Calu3 (cell line): ENCODE measurements at regions of chr6 and their contacts with region 1.

Region 1: GRCh38 chr6:6826095-6826901 is 237.8 kb downstream of the LY86 start:
- DNase-seq: peak; percentile 46
- H3K4me3 Mint-ChIP-seq: no peak overlapping the region
- H3K27ac Mint-ChIP-seq: no peak overlapping the region
- H3K4me1 Mint-ChIP-seq: no peaks in the 10 kb centered on the region
- H3K27me3 Mint-ChIP-seq: no peaks in the 10 kb centered on the region
- CTCF ChIP-seq: no peak

Region 2: GRCh38 chr6:6686748-6687601 is 139.3 kb before region 1 on chr6:
- CTCF ChIA-PET with region 1: no interaction called
- intact Hi-C with region 1: no loop called
- DNase-seq: peak; percentile 97
- H3K4me3 Mint-ChIP-seq: peak overlapping the region; percentile 73
- H3K27ac Mint-ChIP-seq: peak overlapping the region; percentile 75
- H3K4me1 Mint-ChIP-seq: peaks cover 28% of the 10 kb centered on the region
- H3K27me3 Mint-ChIP-seq: no peaks in the 10 kb centered on the region
- CTCF ChIP-seq: no peak

Region 3: DNA sequence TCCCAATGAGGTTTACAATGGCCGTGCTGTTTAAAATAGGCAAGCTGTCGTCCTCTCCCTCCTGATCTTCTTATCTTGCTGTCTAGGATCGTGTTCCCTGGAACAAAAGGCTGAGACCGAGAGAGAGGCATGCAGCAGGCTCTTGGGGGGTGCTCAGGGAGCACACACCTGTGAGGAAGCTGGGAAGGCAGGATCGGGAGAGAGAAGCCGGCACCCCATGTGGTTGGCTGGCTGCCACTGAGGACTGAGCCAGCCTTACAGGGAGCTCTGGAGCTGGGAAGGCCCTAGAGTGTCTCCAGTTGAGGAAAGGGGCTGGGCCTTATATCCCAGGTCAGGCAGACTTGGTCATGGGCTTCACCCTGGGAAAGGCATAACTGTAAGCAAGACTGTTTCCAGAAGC is 53.5 kb before region 1 on chr6:
- CTCF ChIA-PET with region 1: no interaction called
- intact Hi-C with region 1: no loop called
- DNase-seq: no peak
- H3K4me3 Mint-ChIP-seq: no peak overlapping the region
- H3K27ac Mint-ChIP-seq: no peak overlapping the region
- H3K4me1 Mint-ChIP-seq: no peaks in the 10 kb centered on the region
- H3K27me3 Mint-ChIP-seq: no peaks in the 10 kb centered on the region
- CTCF ChIP-seq: no peak

Region 4: DNA sequence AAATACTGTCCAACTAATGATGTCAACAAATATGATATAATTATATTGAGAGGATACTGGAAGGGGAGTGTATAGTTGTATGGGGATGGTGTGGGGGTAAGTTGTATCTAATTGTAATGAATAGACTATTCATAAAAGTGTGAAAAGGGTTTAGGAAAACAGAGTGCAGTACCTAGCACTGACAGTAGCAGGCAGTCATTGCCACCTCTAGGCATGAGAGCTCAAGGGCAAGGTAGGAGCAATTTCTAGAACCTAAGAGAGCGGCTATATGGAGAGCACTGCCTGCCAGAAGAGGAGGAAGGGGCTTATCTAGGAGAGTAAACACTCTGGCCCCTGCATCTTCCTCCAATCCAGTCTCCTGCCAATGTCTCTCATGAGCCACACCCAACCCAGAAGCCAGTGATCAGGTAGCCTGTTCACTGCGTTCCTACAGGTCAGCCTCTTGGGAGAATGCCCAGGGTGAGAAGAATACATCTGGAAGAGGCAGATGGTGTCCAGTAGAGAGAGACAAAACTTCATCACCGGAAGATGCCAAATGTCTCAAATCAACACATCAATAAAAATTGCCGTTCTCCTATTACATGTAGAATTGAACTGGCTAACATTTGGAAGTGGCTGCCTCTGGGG is 37.8 kb before region 1 on chr6:
- CTCF ChIA-PET with region 1: no interaction called
- intact Hi-C with region 1: no loop called
- DNase-seq: no peak
- H3K4me3 Mint-ChIP-seq: no peak overlapping the region
- H3K27ac Mint-ChIP-seq: no peak overlapping the region
- H3K4me1 Mint-ChIP-seq: peaks cover 12% of the 10 kb centered on the region
- H3K27me3 Mint-ChIP-seq: no peaks in the 10 kb centered on the region
- CTCF ChIP-seq: no peak

Region 5: DNA sequence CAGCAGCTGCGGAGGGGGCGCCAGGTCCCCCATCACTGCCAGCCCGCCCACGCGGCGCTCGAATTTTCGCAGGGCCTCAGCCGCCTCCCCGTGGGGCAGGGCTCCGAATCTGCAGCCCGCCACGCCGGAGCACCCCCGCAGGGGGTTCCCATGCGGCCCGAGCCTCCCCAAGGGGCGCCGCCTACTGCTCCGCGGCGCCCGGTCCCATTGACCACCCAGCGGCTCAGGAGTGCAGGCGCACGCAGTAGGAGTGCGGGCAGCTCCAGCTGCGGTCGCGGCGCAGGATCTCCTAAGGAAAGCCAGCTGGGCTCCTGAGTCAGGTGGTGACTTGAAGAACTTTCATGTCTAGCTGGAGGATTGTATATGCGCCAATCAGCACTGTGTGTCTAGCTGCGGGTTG is 126.2 kb after region 1 on chr6:
- CTCF ChIA-PET with region 1: no interaction called
- intact Hi-C with region 1: no loop called
- DNase-seq: no peak
- H3K4me3 Mint-ChIP-seq: no peak overlapping the region
- H3K27ac Mint-ChIP-seq: no peak overlapping the region
- H3K4me1 Mint-ChIP-seq: peaks cover under 1% of the 10 kb centered on the region
- H3K27me3 Mint-ChIP-seq: no peaks in the 10 kb centered on the region
- CTCF ChIP-seq: no peak

Region 6: GRCh38 chr6:6969761-6970223 is 143.5 kb after region 1 on chr6:
- CTCF ChIA-PET with region 1: no interaction called
- intact Hi-C with region 1: loop called (anchors 10 kb)
- DNase-seq: peak; percentile 93
- H3K4me3 Mint-ChIP-seq: no peak overlapping the region
- H3K27ac Mint-ChIP-seq: peak overlapping the region; percentile 98
- H3K4me1 Mint-ChIP-seq: peaks cover 33% of the 10 kb centered on the region
- H3K27me3 Mint-ChIP-seq: no peaks in the 10 kb centered on the region
- CTCF ChIP-seq: no peak

Region 7: GRCh38 chr6:7051233-7052114 is 225.2 kb after region 1 on chr6:
- CTCF ChIA-PET with region 1: no interaction called
- intact Hi-C with region 1: loop called (anchors 10 kb)
- DNase-seq: peak; percentile 45
- H3K4me3 Mint-ChIP-seq: peak overlapping the region; percentile 60
- H3K27ac Mint-ChIP-seq: peak overlapping the region; percentile 80
- H3K4me1 Mint-ChIP-seq: peaks cover 11% of the 10 kb centered on the region
- H3K27me3 Mint-ChIP-seq: no peaks in the 10 kb centered on the region
- CTCF ChIP-seq: no peak